GM10248 (cell line): ENCODE measurements at regions of chr15 and their contacts with region 1.

Region 1: DNA sequence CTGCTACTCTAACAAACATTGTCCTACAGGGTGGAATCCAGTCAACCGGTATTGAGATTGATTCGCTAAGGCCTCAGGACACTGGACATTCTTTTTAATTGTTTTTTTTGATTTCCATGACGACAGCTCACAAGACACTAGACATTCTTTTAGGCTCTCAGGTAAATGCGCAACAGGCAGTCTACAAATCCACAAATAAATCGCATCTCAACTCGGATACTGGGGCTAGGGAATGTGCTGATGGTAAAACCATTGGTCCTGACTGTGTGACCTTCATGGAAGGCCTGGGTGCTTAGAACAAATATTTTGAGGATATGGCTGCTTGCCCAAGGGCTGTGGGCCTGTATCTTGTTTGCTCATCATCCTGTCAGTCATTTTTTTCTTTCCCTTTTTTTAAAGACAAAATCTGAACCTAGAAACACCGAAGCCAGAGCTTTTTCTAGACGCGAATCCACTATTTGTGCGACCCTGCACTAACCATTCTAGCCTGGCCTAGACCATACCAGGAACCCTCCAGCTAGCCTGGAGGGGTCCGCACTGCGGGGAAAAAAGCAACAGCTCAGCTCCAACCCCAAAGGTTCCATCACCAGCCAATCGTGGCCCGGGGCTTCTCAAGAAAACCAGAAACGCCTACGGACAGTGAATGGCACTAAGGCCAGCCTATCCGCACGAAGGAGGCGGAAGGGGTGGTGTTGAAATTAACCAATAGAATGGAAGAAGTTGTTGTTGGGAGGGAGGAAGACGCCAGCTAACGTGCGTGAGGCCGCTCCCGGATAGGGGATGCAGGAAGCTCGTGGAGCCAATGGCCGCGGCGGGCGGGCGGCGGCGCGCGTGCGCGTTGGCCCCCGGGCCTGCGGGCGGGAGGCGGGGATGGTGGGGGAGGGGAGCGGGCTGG is 18.1 kb upstream of the CHD2 start:
- DNase-seq: peak; percentile 98
- CTCF ChIP-seq: no peak

Region 2: DNA sequence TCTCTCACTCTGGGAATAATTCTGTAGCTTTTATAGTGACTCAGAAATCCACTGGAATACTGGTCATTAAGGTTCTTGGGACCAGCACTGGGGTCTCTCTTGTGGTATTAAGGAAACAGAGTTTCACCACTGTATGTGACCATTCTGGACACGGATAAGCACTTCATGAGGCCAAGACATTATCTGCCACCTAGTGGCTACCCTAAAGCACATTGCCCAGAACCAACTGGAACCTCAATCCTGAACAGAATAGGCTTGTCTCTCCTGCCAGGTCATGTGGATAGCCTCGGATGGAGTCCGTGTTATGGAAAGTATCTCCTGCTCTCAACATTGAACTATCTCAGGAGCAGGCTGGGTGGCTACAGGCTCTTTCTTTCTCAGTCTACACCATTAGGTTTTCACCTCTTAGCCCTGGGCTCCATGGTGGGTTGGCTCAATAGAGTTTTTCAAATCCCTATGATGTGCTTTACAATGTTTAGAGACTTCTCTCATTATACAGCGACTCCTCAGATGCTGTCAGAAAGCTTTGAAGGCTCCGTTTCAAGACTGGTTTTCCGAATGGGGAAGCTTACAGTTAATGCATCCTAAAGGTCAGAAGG is 655.9 kb before region 1 on chr15:
- CTCF ChIA-PET with region 1: no interaction called
- POLR2A ChIA-PET with region 1: no interaction called
- DNase-seq: peak; percentile 21
- CTCF ChIP-seq: peak; percentile 32

Region 3: GRCh38 chr15:92831655-92832328 is 50.3 kb before region 1 on chr15:
- CTCF ChIA-PET with region 1: interaction called, 4 read pairs
- POLR2A ChIA-PET with region 1: interaction called, 42 read pairs
- DNase-seq: peak; percentile 88
- CTCF ChIP-seq: no peak

Region 4: GRCh38 chr15:92864127-92864814 is 17.8 kb before region 1 on chr15:
- CTCF ChIA-PET with region 1: interaction called, 17 read pairs
- POLR2A ChIA-PET with region 1: interaction called, 11 read pairs
- DNase-seq: no peak
- CTCF ChIP-seq: no peak

Region 5: GRCh38 chr15:92903941-92904831 is 22.1 kb after region 1 on chr15:
- CTCF ChIA-PET with region 1: interaction called, 19 read pairs
- POLR2A ChIA-PET with region 1: interaction called, 38 read pairs
- DNase-seq: peak; percentile 90
- CTCF ChIP-seq: no peak